ENCODE measurements at regions of chr17 and their contacts with region 1.

Region 1: DNA sequence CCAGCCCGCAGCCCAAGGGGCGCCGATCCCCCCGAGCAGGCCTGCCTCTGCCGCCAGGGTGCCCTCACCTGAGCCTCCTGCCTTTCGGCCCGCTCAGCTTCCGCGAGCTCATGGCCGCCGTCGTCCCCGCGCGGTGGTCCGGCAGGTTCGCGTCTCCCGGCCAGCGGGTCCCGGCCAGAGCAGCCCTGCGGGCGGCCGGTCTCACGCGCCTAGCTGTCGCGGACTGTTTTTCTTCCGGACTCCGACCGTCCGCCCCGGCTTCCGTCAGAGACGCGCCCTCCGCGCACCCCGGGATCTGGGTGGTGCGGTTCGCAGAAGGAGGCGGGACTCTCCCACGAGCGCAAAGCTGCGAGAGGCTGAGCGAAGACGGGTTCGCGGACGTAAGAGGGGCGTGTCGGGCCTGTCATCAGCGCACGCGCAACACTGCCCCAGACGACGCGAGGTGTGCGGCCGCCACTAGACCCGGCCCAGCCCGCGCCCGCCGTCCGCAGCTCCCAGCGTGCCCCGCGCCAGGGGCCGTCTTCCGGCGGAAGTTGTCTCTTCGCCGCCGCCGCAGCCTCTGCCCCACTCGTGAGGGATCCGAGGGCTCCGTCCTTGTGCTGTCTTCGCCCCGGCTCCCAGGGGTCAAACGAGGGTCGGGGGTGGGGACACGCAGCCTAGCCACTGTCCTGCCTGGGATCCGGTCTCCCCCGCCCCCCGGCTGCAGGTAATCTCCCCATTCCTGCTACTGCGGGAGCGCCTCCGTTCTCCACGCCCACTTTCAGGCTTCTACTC is at the start of gene INPP5K:
- DNase-seq: peak; percentile 100
- H3K4me3 ChIP-seq: peak within 1 kb of the TSS; percentile 91
- H3K27ac ChIP-seq: peak within 1 kb of the TSS; percentile 75
- H3K4me1 ChIP-seq: peaks cover 18% of the 10 kb centered on the region
- H3K27me3 ChIP-seq: no peaks in the 10 kb centered on the region
- total RNA-seq, gene INPP5K: 42.3 and 57.8 TPM in 2 replicates

Region 2: DNA sequence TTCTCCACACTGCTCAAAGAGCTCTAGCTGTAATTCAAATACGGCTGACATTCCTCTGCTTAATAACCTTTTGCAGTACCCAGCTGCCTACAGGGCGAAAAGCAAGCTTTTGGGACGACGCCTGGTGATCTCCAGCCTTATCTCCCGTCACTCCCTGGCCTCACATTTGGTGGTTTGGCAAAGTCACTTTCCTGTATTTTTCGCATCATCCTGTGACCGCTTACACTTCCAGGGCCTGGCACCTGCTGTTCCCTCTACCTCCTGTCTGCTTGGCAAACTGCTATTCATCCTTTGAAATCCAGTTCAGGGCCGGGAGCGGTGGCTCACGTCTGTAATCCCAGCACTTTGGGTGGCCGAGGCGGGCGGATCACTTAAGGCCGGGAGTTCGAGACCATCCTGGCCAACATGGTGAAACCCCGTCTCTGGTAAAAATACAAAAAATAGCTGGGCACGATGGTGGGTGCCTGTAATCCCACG is 249.1 kb before region 1 on chr17:
- in situ Hi-C with region 1: loop called (anchors 25 kb)
- DNase-seq: peak; percentile 52
- H3K4me3 ChIP-seq: peak overlapping the region; percentile 77
- H3K27ac ChIP-seq: peak overlapping the region; percentile 22; the same call in 1 of the 2 replicates
- H3K4me1 ChIP-seq: 0 out of 2 replicates have a peak, but pooled peaks cover 3% of the 10 kb centered on the region
- H3K27me3 ChIP-seq: peaks cover 16% of the 10 kb centered on the region

Measured in GM23248 (cell line).